ENCODE measurements at regions of chr16 and their contacts with region 1.

Region 1: GRCh38 chr16:8797364-8798173 is at the starts of genes PMM2 and TMEM186:
- DNase-seq: peak; percentile 92
- ATAC-seq: peak; percentile 95
- H3K4me3 ChIP-seq: peak within 1 kb of the TSS; percentile 96
- H3K27ac ChIP-seq: peak within 1 kb of the TSS; percentile 84
- H3K4me1 ChIP-seq: peaks cover 10% of the 10 kb centered on the region
- H3K27me3 ChIP-seq: no peaks in the 10 kb centered on the region
- CTCF ChIP-seq: no peak
- EP300 ChIP-seq: no peak
- POLR2A ChIP-seq: peak; percentile 99
- RAD21 ChIP-seq: no peak
- polyA plus RNA-seq, gene PMM2: 22.6 to 24.2 TPM
- polyA plus RNA-seq, gene TMEM186: 27.3 to 28.9 TPM

Region 2: GRCh38 chr16:8567750-8568617 is 229.6 kb before region 1 on chr16:
- CTCF ChIA-PET with region 1: interaction called, 17 read pairs
- POLR2A ChIA-PET with region 1: interaction called, 3 read pairs
- RAD21 ChIA-PET with region 1: interaction called, 3 read pairs
- SMC1A ChIA-PET with region 1: interaction called, 4 read pairs
- in situ Hi-C with region 1: loop called (anchors 5 kb)
- intact Hi-C with region 1: loop called (anchors 1 kb)
- DNase-seq: peak; percentile 66
- ATAC-seq: peak; percentile 96
- H3K4me3 ChIP-seq: no peak overlapping the region
- H3K27ac ChIP-seq: no peak overlapping the region
- H3K4me1 ChIP-seq: no peaks in the 10 kb centered on the region
- H3K27me3 ChIP-seq: no peaks in the 10 kb centered on the region; a peak in 1 of 4 replicates
- CTCF ChIP-seq: peak; percentile 88 to 99 (median 95)
- EP300 ChIP-seq: no peak
- POLR2A ChIP-seq: no peak
- RAD21 ChIP-seq: peak; percentile 96

Region 3: DNA sequence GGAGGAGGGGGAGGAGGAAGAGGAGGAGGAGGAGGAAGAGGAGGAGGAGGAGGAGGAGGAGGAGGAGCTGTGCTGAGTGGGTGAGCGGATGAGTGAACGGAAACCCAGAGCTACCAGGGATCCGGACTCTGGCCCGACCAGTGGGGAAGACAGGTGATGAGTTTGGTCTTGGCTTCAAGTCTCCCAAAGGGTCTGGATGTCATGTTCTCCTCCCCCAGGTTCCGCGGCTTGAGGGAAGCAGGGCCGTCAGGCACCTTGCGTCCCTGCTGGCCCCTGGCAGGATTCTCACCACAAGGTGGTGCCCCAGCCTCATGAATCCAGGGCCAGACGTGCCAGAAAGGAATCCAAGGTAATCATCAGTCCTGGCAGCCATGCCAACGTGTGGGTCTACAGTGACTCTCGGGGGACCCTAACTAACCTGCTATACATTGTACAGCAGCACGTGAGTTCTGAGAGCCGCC is 136.7 kb before region 1 on chr16:
- CTCF ChIA-PET with region 1: interaction called, 62 read pairs
- POLR2A ChIA-PET with region 1: no interaction called
- RAD21 ChIA-PET with region 1: interaction called, 21 read pairs
- SMC1A ChIA-PET with region 1: interaction called, 13 read pairs
- in situ Hi-C with region 1: loop called (anchors 5 kb)
- intact Hi-C with region 1: loop called (anchors 1 kb)
- DNase-seq: no peak
- ATAC-seq: peak; percentile 86
- H3K4me3 ChIP-seq: no peak overlapping the region
- H3K27ac ChIP-seq: no peak overlapping the region
- H3K4me1 ChIP-seq: peaks cover under 1% of the 10 kb centered on the region; the same call in 1 of the 2 replicates
- H3K27me3 ChIP-seq: no peaks in the 10 kb centered on the region
- CTCF ChIP-seq: peak; percentile 42 to 69 (median 59)
- EP300 ChIP-seq: no peak
- POLR2A ChIP-seq: no peak
- RAD21 ChIP-seq: peak; percentile 75

Region 4: GRCh38 chr16:8868416-8869211 is 71.0 kb after region 1 on chr16 and contains the start of gene CARHSP1:
- CTCF ChIA-PET with region 1: no interaction called
- POLR2A ChIA-PET with region 1: interaction called, 5 read pairs
- RAD21 ChIA-PET with region 1: interaction called, 8 read pairs
- SMC1A ChIA-PET with region 1: interaction called, 3 read pairs
- in situ Hi-C with region 1: no loop called
- intact Hi-C with region 1: loop called (anchors 1 kb)
- DNase-seq: peak; percentile 51
- ATAC-seq: peak; percentile 82
- H3K4me3 ChIP-seq: peak within 1 kb of the TSS; percentile 95
- H3K27ac ChIP-seq: peak within 1 kb of the TSS; percentile 90
- H3K4me1 ChIP-seq: peaks cover 32% of the 10 kb centered on the region
- H3K27me3 ChIP-seq: no peaks in the 10 kb centered on the region
- CTCF ChIP-seq: no peak
- EP300 ChIP-seq: no peak
- POLR2A ChIP-seq: peak; percentile 79
- RAD21 ChIP-seq: no peak
- polyA plus RNA-seq, gene CARHSP1: 5.5 to 8.4 TPM

Region 5: GRCh38 chr16:8892101-8892575 is 94.6 kb after region 1 on chr16:
- CTCF ChIA-PET with region 1: no interaction called
- POLR2A ChIA-PET with region 1: no interaction called
- RAD21 ChIA-PET with region 1: interaction called, 4 read pairs
- SMC1A ChIA-PET with region 1: interaction called, 3 read pairs
- in situ Hi-C with region 1: no loop called
- intact Hi-C with region 1: loop called (anchors 5 kb)
- DNase-seq: peak; percentile 42
- ATAC-seq: peak; percentile 59
- H3K4me3 ChIP-seq: peak overlapping the region; percentile 59
- H3K27ac ChIP-seq: peak overlapping the region; percentile 95
- H3K4me1 ChIP-seq: peaks cover 49% of the 10 kb centered on the region
- H3K27me3 ChIP-seq: no peaks in the 10 kb centered on the region
- CTCF ChIP-seq: no peak
- EP300 ChIP-seq: no peak
- POLR2A ChIP-seq: no peak; the same call in 1 of the 2 replicates
- RAD21 ChIP-seq: no peak

Region 6: GRCh38 chr16:9090960-9091866 is 293.6 kb after region 1 on chr16 and contains the start of gene HAPSTR1:
- CTCF ChIA-PET with region 1: no interaction called
- POLR2A ChIA-PET with region 1: no interaction called
- RAD21 ChIA-PET with region 1: no interaction called
- SMC1A ChIA-PET with region 1: no interaction called
- in situ Hi-C with region 1: no loop called
- intact Hi-C with region 1: loop called (anchors 5 kb)
- DNase-seq: peak; percentile 99
- ATAC-seq: peak; percentile 93
- H3K4me3 ChIP-seq: peak within 1 kb of the TSS; percentile 81
- H3K27ac ChIP-seq: peak within 1 kb of the TSS; percentile 90
- H3K4me1 ChIP-seq: peaks cover 6% of the 10 kb centered on the region
- H3K27me3 ChIP-seq: no peaks in the 10 kb centered on the region
- CTCF ChIP-seq: no peak
- EP300 ChIP-seq: no peak; a peak in 1 of 4 replicates
- POLR2A ChIP-seq: peak; percentile 98
- RAD21 ChIP-seq: no peak
- polyA plus RNA-seq, gene HAPSTR1: 8.7 to 12.5 TPM